ENCODE measurements at regions of chr6 and their contacts with region 1.

Region 1: GRCh38 chr6:84227434-84228197 is at the start of gene CEP162:
- DNase-seq: peak; percentile 93 to 99 (median 96)

Region 2: DNA sequence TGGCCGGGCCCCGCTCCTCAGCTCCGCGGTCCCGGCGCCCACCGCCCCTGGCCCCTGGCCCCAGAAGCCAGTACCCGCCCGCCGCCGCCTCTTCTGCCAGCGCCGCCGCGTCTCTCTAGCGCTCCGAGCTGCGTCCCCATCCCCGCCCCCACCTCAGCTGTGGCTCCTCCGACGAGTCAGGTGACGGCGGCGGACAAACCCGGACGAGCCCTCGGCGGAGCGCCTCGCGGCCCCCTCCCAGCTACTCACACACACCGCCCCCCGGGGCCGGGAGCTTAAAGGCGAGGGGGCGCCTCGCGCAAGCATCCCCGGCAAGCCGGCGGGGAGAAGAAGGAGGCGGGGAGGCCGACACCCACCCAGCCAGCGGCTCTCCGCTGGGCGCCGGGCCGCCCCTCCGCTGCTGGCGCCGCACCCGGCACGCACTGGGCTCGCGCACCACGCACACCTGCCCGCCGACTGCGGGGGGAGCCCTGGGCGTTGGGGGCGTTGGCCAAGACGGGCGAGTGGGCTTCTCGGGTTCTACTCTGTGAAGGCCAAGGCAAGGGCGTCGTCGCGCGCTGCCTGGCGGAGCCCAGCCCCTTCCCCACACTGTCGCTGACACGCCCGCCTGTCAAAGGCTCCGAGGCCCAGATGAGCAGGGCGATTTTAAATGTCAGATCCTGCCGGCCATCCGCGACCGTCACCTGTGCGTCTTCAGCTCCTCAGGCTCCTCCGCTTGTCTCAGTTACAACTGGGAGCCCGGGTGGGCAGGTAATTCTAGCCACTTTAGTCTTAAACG is 518.5 kb before region 1 on chr6 and contains the start of gene SNAP91:
- intact Hi-C with region 1: loop called (anchors 5 kb)
- DNase-seq: peak; percentile 68 to 97 (median 87)

Region 3: GRCh38 chr6:83824388-83824801 is 403.2 kb before region 1 on chr6:
- intact Hi-C with region 1: no loop called
- DNase-seq: no peak

Region 4: GRCh38 chr6:83859410-83860358 is 367.9 kb before region 1 on chr6 and contains the start of gene CYB5R4:
- intact Hi-C with region 1: loop called (anchors 10 kb)
- DNase-seq: peak; percentile 87 to 99 (median 94)

Region 5: GRCh38 chr6:83884523-83884922 is 343.1 kb before region 1 on chr6:
- intact Hi-C with region 1: loop called (anchors 2 kb)
- DNase-seq: no peak

Region 6: DNA sequence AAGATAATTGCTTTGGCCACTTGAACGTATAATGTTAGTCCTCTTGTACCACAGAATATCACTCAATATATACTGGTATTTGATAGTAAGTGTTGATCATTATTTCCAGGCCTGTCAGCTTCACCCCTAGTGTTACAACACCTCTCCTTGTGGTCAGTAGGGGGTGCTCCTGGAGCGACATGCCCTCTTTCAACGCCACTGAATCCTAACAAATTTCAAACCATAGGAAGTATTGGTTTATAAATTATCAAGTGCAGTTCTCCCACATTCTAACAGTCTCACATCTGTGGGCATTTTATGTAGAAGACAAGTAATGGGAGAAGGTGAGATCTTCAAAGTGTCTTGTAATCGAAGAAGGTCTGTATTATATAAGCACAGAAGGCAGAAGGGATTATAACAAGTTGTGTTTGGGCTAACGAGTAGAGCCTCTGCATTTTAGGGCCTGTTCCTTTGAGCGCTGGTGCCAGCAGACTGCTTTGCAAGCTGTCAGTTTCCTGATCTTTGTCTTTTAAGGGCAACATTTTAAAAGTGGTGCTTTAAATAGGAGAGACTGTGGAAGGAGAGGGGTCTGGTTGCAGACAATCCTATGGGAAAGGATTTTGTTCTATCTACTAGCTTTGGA is 56.9 kb after region 1 on chr6:
- intact Hi-C with region 1: no loop called
- DNase-seq: no peak

Region 7: DNA sequence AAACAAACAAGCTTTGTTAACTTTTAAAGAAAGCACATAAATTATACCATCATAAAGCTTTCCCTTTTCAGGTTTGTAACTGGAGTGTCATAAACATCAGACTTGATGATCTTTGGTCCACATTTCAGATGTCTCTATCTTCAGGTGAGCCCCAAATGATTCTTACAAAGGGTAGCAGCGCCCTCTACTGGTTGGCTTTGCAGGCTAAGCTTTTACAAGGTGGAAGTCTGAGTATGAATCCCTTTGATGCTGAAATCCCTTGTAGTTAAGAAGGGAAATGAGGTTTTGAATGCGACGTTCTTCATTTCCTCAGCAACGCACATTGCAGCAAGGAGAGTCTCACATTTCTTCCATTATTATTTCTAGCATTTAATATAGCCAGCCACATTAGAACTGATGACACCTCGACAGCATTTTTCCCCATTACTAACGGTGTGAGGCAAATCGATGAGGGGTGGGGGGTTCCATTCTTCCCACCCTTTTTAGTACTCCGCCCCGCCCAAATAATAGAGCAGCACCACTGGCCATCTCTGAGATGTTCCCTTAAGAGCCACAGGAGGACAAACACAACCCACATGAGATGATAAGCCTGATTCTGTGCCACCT is 1095.9 kb after region 1 on chr6:
- intact Hi-C with region 1: loop called (anchors 10 kb)
- DNase-seq: peak in 8 of 10 donors; percentile 29 to 94 (median 78)

Measured in posterior cingulate gyrus (tissue), 11 donors.